CD4-positive, alpha-beta memory T cell (primary cell): ENCODE measurements at regions of chr12 and their contacts with region 1.

Region 1: DNA sequence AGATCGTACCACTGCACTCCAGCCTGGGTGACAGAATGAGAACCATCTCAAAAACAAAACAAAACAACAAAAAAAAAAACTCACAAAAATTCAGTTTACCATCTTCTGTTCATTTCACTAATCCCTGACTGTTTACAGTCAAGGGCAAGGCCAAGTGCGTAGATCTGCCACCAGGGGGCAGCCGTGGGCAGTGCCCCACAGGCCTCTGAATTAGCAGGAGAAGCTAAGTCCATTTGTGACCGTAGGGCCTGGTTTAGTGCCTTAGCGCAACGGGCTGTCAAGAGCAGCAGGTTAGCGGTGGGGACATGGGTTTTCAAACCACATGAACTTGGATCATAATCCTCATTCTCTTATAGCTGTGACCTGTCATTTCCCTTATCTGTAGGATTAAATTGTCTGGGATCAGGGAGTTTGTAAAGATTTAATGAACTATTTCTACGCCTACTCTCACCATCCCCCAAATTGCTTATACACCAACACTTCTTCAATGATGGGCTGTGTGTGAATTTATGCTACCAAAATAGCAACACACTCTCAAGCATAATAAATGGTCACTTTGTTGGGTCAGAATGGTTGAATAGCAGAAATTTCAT is 49.0 kb downstream of the KCTD10 start:
- DNase-seq: peak; percentile 57 to 70 (median 64)
- H3K4me3 ChIP-seq: no peak overlapping the region
- H3K4me3 Mint-ChIP-seq: no peak overlapping the region
- H3K27ac ChIP-seq: no peak overlapping the region
- H3K27ac Mint-ChIP-seq: no peak overlapping the region
- H3K4me1 ChIP-seq: peaks cover 4% of the 10 kb centered on the region
- H3K4me1 Mint-ChIP-seq: peaks cover 2 to 7% (median 6%) of the 10 kb centered on the region in 4 donors
- H3K27me3 ChIP-seq: no peaks in the 10 kb centered on the region
- H3K27me3 Mint-ChIP-seq: peaks cover 8 to 11% of the 10 kb centered on the region in 2 donors

Region 2: GRCh38 chr12:109445191-109445609 is 17.1 kb after region 1 on chr12:
- CTCF ChIA-PET with region 1: interaction called, 10 read pairs
- POLR2A ChIA-PET with region 1: no interaction called
- intact Hi-C with region 1: no loop called
- DNase-seq: no peak
- H3K4me3 ChIP-seq: no peak overlapping the region
- H3K4me3 Mint-ChIP-seq: no peak overlapping the region
- H3K27ac ChIP-seq: no peak overlapping the region
- H3K27ac Mint-ChIP-seq: no peak overlapping the region
- H3K4me1 ChIP-seq: no peaks in the 10 kb centered on the region
- H3K4me1 Mint-ChIP-seq: no peaks in the 10 kb centered on the region
- H3K27me3 ChIP-seq: no peaks in the 10 kb centered on the region
- H3K27me3 Mint-ChIP-seq: no peaks in the 10 kb centered on the region

Region 3: DNA sequence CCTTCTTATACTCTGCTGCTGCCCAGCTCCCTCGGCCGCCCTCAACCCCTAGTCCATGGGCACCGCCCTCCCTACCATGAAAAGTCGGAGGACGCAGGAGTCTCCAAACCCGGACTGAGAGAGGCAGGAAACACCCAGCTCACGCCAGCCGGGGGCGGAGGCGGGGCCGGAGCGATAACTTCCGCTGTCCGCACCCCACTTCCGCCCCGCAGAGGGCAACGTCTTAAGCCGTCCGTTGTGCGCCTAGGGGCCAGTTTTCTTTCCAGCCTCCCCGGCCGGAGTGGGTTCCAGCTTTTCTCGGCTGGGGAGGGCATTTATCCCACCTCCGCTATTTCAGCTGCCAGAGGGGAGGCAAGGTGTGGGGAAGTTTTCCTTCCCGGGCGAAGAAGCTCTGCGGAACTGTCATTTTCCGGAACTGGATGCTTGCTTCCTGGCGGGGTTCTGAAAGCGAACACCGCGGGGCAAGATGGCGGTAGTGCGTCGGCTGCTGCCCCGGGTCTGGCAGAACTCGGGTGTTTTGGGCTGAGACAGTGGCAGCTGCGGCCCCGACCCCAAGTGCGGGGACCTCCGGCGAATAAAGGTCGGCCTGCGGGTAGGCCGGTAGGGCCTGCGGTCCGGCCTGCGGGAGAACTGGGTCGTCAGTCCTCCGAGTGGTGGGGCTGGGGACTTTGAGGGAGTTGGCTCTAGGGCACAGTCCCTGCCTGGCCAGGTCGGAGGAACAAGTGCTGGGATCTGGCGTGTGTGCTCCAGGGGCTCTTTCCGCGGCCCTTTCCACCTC is 49.2 kb after region 1 on chr12 and contains the starts of genes KCTD10 and UBE3B:
- CTCF ChIA-PET with region 1: interaction called, 6 read pairs
- POLR2A ChIA-PET with region 1: no interaction called
- intact Hi-C with region 1: loop called (anchors 5 kb)
- DNase-seq: peak; percentile 85 to 89 (median 87)
- H3K4me3 ChIP-seq: peak within 1 kb of the TSS; percentile 93 to 97
- H3K4me3 Mint-ChIP-seq: peak within 1 kb of the TSS; percentile 97 to 99 (median 97)
- H3K27ac ChIP-seq: peak within 1 kb of the TSS; percentile 87
- H3K27ac Mint-ChIP-seq: peak within 1 kb of the TSS; percentile 98 to 100 (median 99)
- H3K4me1 ChIP-seq: peaks cover 38% of the 10 kb centered on the region
- H3K4me1 Mint-ChIP-seq: peaks cover 31 to 67% (median 37%) of the 10 kb centered on the region in 4 donors
- H3K27me3 ChIP-seq: no peaks in the 10 kb centered on the region
- H3K27me3 Mint-ChIP-seq: no peaks in the 10 kb centered on the region
- total RNA-seq, gene KCTD10: 29.2 to 31.9 TPM
- total RNA-seq, gene UBE3B: 55.8 to 58.1 TPM

Region 4: GRCh38 chr12:109775172-109775881 is 347.2 kb after region 1 on chr12:
- CTCF ChIA-PET with region 1: interaction called, 28 read pairs
- POLR2A ChIA-PET with region 1: no interaction called
- intact Hi-C with region 1: loop called (anchors 1 kb)
- DNase-seq: peak; percentile 56 to 68 (median 61)
- H3K4me3 ChIP-seq: no peak overlapping the region
- H3K4me3 Mint-ChIP-seq: no peak overlapping the region
- H3K27ac ChIP-seq: no peak overlapping the region
- H3K27ac Mint-ChIP-seq: no peak overlapping the region
- H3K4me1 ChIP-seq: no peaks in the 10 kb centered on the region
- H3K4me1 Mint-ChIP-seq: peaks cover 5 to 9% (median 6%) of the 10 kb centered on the region in 4 donors
- H3K27me3 ChIP-seq: no peaks in the 10 kb centered on the region
- H3K27me3 Mint-ChIP-seq: peaks cover 1 to 3% of the 10 kb centered on the region in 2 donors